ENCODE measurements at regions of chr7 and their contacts with region 1.

Region 1: GRCh38 chr7:102450242-102450641 is 14.4 kb downstream of the ALKBH4 start:
- DNase-seq: no peak
- H3K4me3 ChIP-seq: no peak overlapping the region
- H3K27ac ChIP-seq: no peak overlapping the region
- H3K4me1 ChIP-seq: peaks cover 0 to 3% (median 0%) of the 10 kb centered on the region in 4 experiments; a peak in 2 of 7 replicates
- H3K27me3 ChIP-seq: no peaks in the 10 kb centered on the region
- CTCF ChIP-seq: peak; percentile 28 to 41 (median 30)
- EP300 ChIP-seq: no peak
- POLR2A ChIP-seq: no peak
- RAD21 ChIP-seq: peak; percentile 13 to 56; a peak in 3 of 4 replicates

Region 2: DNA sequence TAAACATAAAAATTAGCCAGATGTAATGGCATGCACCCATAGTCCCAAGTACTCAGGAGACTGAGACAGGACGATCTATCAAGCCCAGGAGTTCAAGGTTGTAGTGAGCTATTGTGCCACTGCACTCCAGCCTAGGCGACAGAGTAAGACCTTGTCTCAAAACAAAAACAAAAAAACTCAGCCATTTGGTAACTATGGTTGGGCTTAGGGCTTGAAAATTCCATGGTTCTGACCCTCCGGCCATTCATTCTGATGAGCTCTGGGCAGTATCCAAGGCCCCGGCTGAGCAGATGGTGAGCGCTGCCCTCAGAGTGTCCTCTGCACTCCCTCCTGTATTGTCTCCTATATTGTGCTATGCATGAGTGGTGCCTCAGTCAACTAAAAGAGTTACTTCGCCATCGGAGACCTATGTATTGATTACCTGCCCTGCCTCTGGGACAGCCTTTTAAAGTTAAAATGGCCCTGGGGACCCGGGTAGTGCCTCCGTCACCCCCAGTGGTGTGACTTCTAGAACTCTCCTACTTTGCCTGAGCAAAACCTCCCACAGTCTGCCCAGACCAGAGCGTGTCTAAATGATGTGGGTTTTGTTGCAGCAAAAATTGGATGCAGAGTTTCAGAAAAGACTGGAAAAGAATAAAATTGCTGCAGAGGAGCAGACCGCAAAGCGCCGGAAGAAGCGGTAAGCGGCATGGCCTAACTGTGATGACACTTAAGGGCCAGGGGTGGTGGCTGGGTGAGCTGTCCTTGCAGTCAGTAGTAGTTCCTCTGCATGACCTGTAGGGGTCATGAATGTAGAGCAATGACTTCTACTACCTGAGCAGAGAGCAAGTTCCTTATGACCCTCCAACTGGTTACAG is 46.0 kb before region 1 on chr7:
- CTCF ChIA-PET with region 1: interaction called, 22 read pairs
- POLR2A ChIA-PET with region 1: interaction called, 9 read pairs
- DNase-seq: peak in 1 of 2 experiments; percentile 55
- H3K4me3 ChIP-seq: no peak overlapping the region
- H3K27ac ChIP-seq: no peak overlapping the region
- H3K4me1 ChIP-seq: no peaks in the 10 kb centered on the region
- H3K27me3 ChIP-seq: no peaks in the 10 kb centered on the region
- CTCF ChIP-seq: peak; percentile 66 to 90 (median 71)
- EP300 ChIP-seq: no peak
- POLR2A ChIP-seq: no peak
- RAD21 ChIP-seq: peak; percentile 69 to 70

Region 3: DNA sequence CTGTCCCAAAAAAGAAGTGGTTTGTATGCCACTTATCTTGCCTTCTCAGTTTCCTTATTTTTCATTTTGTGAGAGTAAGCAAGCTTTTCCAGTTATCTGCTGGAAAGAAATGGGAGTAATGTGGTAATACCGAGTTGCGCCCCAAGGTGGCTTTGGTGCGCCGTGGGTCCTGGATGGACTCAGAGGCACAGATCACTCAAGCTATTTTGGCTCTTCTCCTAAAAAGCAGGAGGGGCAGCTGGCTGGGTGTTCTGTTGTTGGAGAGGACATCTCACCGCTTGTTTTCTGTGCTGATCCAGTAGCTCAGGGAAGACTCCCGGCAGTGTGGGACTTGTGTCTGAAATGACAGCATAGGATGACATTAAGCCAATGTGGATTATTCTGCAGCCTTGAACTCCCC is 37.7 kb before region 1 on chr7:
- CTCF ChIA-PET with region 1: interaction called, 13 read pairs
- POLR2A ChIA-PET with region 1: interaction called, 5 read pairs
- DNase-seq: peak in 1 of 2 experiments; percentile 76
- H3K4me3 ChIP-seq: no peak overlapping the region
- H3K27ac ChIP-seq: no peak overlapping the region
- H3K4me1 ChIP-seq: no peaks in the 10 kb centered on the region
- H3K27me3 ChIP-seq: no peaks in the 10 kb centered on the region
- CTCF ChIP-seq: peak; percentile 55 to 58 (median 57)
- EP300 ChIP-seq: no peak
- POLR2A ChIP-seq: no peak
- RAD21 ChIP-seq: peak; percentile 65 to 69

Region 4: GRCh38 chr7:102440078-102440795 is 10.0 kb before region 1 on chr7:
- CTCF ChIA-PET with region 1: interaction called, 5 read pairs
- POLR2A ChIA-PET with region 1: interaction called, 27 read pairs
- DNase-seq: peak in 1 of 2 experiments; percentile 53
- H3K4me3 ChIP-seq: no peak overlapping the region
- H3K27ac ChIP-seq: no peak overlapping the region
- H3K4me1 ChIP-seq: peaks cover 0 to 9% (median 0%) of the 10 kb centered on the region in 4 experiments; a peak in 2 of 7 replicates
- H3K27me3 ChIP-seq: no peaks in the 10 kb centered on the region
- CTCF ChIP-seq: no peak
- EP300 ChIP-seq: no peak
- POLR2A ChIP-seq: no peak
- RAD21 ChIP-seq: no peak

Region 5: GRCh38 chr7:102464577-102465280 is 14.5 kb after region 1 on chr7 and contains the starts of genes ALKBH4 and LRWD1:
- CTCF ChIA-PET with region 1: interaction called, 6 read pairs
- POLR2A ChIA-PET with region 1: interaction called, 11 read pairs
- DNase-seq: peak; percentile 70 to 97
- H3K4me3 ChIP-seq: peak within 1 kb of the TSS; percentile 82 to 99 (median 88)
- H3K27ac ChIP-seq: peak within 1 kb of the TSS; percentile 12; the same call in 1 of the 2 replicates
- H3K4me1 ChIP-seq: peaks cover 0 to 10% (median 1%) of the 10 kb centered on the region in 4 experiments; a peak in 3 of 7 replicates
- H3K27me3 ChIP-seq: no peaks in the 10 kb centered on the region; a peak in 1 of 7 replicates
- CTCF ChIP-seq: peak in 2 of 3 experiments; percentile 7 to 20; a peak in 3 of 4 replicates
- EP300 ChIP-seq: no peak
- POLR2A ChIP-seq: peak in 1 of 2 experiments; percentile 60; a peak in 2 of 3 replicates
- RAD21 ChIP-seq: peak in 1 of 2 experiments; percentile 0; a peak in 2 of 4 replicates
- total RNA-seq, gene ALKBH4: 16.6 and 17.7 TPM in 2 replicates
- total RNA-seq, gene LRWD1: 26.8 and 28.5 TPM in 2 replicates

Measured in H1 (cell line).